HEK293 (cell line): ENCODE measurements at regions of chr17 and their contacts with region 1.

Region 1: GRCh38 chr17:48804925-48805411 is 12.1 kb downstream of the TTLL6 start:
- H3K4me3 ChIP-seq: no peak overlapping the region
- H3K27ac ChIP-seq: no peak overlapping the region
- H3K4me1 ChIP-seq: peaks cover 4% of the 10 kb centered on the region
- CTCF ChIP-seq: peak; percentile 76

Region 2: DNA sequence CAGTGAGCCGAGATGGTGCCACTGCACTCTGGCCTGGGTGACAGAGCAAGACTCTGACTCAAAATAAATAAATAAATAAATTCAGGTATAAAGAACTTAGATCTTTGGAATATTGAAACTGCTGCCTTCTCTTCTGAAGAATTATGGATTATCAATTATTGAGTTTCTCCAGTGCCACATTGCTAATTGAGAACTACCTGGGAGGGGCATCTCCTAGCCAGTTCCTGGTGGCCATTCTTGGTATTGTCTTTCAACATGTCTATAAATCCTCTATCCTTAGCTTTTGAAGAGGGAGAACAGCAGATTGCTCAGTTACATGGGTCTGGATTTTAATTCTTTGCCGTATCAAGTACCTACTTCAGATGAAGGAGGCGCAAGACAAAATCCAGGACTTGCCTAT is 55.1 kb after region 1 on chr17:
- CTCF ChIA-PET with region 1: interaction called, 16 read pairs
- POLR2A ChIA-PET with region 1: no interaction called
- H3K4me3 ChIP-seq: no peak overlapping the region
- H3K27ac ChIP-seq: no peak overlapping the region
- H3K4me1 ChIP-seq: no peaks in the 10 kb centered on the region
- CTCF ChIP-seq: no peak

Region 3: GRCh38 chr17:48901241-48901640 is 96.3 kb after region 1 on chr17:
- CTCF ChIA-PET with region 1: no interaction called
- POLR2A ChIA-PET with region 1: no interaction called
- H3K4me3 ChIP-seq: no peak overlapping the region
- H3K27ac ChIP-seq: no peak overlapping the region
- H3K4me1 ChIP-seq: no peaks in the 10 kb centered on the region
- CTCF ChIP-seq: no peak